ENCODE measurements at regions of chr6 and their contacts with region 1.

Region 1: DNA sequence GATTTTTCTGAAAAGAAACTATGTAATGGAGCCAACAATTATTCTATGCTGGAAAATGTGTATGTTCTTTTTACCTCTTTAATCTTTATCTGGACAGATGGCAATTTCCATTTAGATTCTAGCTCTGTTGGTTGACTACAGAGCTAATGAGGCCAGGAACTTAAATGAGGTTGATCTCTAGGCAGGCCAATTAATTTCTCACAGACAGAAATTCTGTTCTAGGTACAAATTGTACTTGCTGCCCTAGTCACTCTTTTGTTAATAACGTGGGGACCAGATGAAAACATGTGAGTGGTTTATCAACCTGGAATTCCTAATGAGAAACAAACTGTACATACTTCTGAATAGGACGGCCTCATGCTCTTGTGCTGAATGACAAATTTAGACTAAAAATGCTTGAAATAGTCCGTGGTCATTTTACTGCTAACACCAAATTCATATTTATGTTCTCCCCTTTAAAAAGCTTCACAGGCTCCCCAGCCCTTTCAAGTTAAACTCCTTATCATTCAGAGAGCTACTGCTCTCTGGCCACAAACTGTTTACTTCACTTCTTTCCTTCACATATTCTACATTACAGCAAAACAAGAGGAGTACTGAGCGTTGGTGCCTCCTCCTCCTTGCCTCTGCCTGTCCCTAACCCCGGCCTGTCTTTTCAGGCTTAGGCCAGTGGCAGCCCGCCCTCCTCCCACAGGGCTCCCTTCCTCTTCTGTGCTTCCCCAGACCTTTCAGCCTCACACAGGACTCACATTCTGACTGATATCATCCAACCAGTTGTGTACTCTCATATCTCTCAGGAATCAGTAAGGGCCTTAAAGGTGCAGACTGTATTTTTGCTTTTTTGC is 41.4 kb downstream of the DTNBP1 start:
- DNase-seq: peak; percentile 45
- H3K4me3 Mint-ChIP-seq: no peak overlapping the region
- H3K27ac Mint-ChIP-seq: no peak overlapping the region
- H3K4me1 Mint-ChIP-seq: peaks cover 46% of the 10 kb centered on the region
- H3K27me3 Mint-ChIP-seq: no peaks in the 10 kb centered on the region

Region 2: DNA sequence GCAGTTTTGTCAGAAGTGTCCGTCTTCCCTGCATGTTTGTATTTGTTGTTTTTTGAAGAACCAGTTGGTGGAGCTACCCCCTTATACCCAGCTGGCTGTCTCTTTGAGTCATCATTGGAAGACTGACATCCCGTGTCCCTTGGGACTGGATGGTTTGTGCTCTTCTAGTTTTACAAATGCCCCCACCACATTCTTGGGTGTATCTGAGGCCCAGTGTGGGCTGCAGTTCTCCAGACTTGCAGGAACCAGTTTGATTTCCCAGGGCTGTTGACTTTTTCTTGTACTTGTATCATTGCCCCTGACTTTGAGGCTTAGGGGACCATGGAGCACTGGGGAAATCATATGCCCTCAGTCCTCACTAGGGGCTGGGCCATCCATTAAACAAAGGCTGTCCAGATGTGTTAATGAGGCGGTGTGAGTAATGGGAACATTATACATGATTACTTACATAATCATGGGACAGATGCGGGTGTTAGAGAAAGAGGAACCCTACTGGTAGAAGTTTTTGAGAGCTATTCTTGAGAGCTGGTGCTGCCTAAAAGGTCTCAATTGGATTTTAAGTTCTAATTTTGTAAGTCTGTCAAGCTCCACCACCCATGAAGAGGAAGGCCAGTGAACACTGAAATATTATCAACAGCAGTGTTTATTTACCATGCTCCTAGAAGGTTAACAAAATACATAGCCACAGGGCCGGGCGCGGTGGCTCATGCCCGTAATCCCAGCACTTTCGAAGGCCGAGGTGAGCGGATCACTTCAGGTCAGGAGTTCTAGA is 367.2 kb before region 1 on chr6:
- CTCF ChIA-PET with region 1: no interaction called
- POLR2A ChIA-PET with region 1: no interaction called
- intact Hi-C with region 1: loop called (anchors 5 kb)
- DNase-seq: no peak
- H3K4me3 Mint-ChIP-seq: peak overlapping the region; percentile 96
- H3K27ac Mint-ChIP-seq: peak overlapping the region; percentile 98
- H3K4me1 Mint-ChIP-seq: peaks cover 93% of the 10 kb centered on the region
- H3K27me3 Mint-ChIP-seq: no peaks in the 10 kb centered on the region

Region 3: GRCh38 chr6:15369838-15370237 is 251.6 kb before region 1 on chr6:
- CTCF ChIA-PET with region 1: no interaction called
- POLR2A ChIA-PET with region 1: no interaction called
- intact Hi-C with region 1: no loop called
- DNase-seq: no peak
- H3K4me3 Mint-ChIP-seq: no peak overlapping the region
- H3K27ac Mint-ChIP-seq: no peak overlapping the region
- H3K4me1 Mint-ChIP-seq: peaks cover 61% of the 10 kb centered on the region
- H3K27me3 Mint-ChIP-seq: no peaks in the 10 kb centered on the region

Region 4: DNA sequence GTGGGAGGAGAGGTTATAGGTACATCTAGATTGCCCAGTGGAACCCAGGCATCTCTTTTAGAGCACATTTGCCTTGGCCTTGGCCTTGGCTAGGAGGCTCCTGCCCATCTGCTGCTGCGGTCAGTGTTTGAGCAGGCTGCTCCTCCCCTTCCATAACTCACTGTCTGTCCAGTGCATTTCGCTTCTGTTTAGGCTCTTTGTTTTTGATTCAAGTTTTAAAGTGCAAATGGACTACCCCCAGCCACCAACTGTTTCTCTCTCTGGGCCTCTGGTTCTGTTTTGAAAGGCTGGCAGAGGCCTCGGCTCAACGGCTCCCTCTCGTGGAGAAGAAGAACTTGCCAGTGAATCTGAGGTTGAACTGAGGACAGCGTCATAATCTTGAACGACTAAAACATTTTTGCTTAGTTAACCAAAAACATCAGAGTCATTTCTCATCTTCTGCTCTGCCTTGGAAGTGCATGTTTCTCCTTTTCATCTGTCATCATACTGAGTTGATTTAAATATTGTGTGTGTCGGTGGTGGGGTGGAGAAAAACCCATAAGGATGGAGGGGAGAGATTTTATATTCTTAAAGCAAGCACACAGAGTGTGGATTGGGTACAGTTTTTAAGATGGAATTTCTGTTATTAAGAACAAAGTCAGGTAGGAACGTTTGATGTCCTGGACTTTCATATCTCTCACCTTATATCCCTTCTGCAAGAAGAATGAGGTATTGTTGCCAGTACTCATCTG is 130.0 kb before region 1 on chr6:
- CTCF ChIA-PET with region 1: interaction called, 10 read pairs
- POLR2A ChIA-PET with region 1: no interaction called
- intact Hi-C with region 1: loop called (anchors 1 kb)
- DNase-seq: peak; percentile 84
- H3K4me3 Mint-ChIP-seq: no peak overlapping the region
- H3K27ac Mint-ChIP-seq: peak overlapping the region; percentile 76
- H3K4me1 Mint-ChIP-seq: peaks cover 35% of the 10 kb centered on the region
- H3K27me3 Mint-ChIP-seq: no peaks in the 10 kb centered on the region

Region 5: GRCh38 chr6:15522427-15522826 is 99.0 kb before region 1 on chr6:
- CTCF ChIA-PET with region 1: interaction called, 4 read pairs
- POLR2A ChIA-PET with region 1: no interaction called
- intact Hi-C with region 1: loop called (anchors 5 kb)
- DNase-seq: peak; percentile 25
- H3K4me3 Mint-ChIP-seq: no peak overlapping the region
- H3K27ac Mint-ChIP-seq: peak overlapping the region; percentile 72
- H3K4me1 Mint-ChIP-seq: peaks cover 20% of the 10 kb centered on the region
- H3K27me3 Mint-ChIP-seq: no peaks in the 10 kb centered on the region

Region 6: DNA sequence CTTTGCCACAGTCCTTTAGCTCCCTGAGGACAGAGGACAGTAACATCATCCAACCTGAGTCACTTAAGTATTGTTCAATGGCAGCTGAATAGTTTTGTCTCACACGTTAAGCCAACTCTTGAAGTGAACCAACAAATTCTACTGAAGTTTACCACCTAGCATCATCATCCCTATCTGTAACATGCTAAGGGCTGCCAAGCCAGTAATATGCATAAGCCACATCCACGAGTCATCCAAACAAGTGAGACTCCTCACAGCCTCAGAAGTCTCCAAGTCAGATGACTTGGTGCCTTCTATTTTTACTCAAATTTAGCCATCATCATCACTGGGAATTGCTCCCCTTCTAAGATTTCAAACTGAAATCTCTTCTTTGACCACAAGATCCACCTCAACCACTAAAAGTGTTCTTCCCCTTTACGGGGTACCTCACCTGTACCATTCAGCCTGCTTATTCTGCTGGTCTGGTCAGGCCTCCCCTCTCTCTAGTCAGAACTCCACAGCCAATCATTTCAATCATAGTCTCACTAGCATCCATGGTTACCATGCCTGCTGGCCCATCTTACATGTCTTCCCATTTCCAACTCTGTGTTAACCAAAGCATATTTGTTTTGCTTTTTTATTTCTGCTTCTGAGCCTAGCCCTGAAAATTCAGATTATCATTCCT is 32.3 kb before region 1 on chr6:
- CTCF ChIA-PET with region 1: interaction called, 4 read pairs
- POLR2A ChIA-PET with region 1: interaction called, 3 read pairs
- intact Hi-C with region 1: loop called (anchors 5 kb)
- DNase-seq: peak; percentile 59
- H3K4me3 Mint-ChIP-seq: no peak overlapping the region
- H3K27ac Mint-ChIP-seq: no peak overlapping the region
- H3K4me1 Mint-ChIP-seq: peaks cover 37% of the 10 kb centered on the region
- H3K27me3 Mint-ChIP-seq: no peaks in the 10 kb centered on the region

Measured in activated CD4-positive, alpha-beta memory T cell treated with anti-CD3 and anti-CD28 coated beads for 36 hours (primary cell).